SK-N-SH (cell line): ENCODE measurements at regions of chr6 and their contacts with region 1.

Region 1: GRCh38 chr6:73653571-73654424 is at the start of gene SLC17A5:
- DNase-seq: peak; percentile 95
- H3K4me3 ChIP-seq: peak within 1 kb of the TSS; percentile 86 to 92
- H3K27ac ChIP-seq: peak within 1 kb of the TSS; percentile 67 to 70
- H3K4me1 ChIP-seq: peaks cover 0 to 3% of the 10 kb centered on the region in 2 experiments; a peak in 2 of 4 replicates
- H3K27me3 ChIP-seq: no peaks in the 10 kb centered on the region
- CTCF ChIP-seq: no peak
- EP300 ChIP-seq: no peak
- RAD21 ChIP-seq: no peak
- polyA plus RNA-seq, gene SLC17A5: 9.2 and 14.0 TPM in 2 replicates

Region 2: DNA sequence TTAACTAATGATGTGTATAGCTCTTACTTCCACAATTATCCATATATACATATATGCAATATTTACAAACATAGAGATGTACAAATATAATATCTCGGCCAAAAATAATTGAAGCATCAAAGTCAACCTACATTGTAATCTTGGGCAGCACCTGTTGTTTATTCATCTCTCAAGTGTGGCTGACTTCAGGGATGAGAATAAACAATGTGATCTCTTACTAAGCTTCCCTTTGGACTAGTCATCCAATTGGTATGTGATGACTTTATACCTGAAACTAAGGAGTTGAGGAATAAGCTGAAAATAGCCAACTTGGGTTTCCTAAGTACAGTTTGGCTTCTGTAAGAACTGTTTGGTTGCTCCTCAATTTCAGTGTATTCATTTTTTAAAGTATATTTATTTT is 685.1 kb before region 1 on chr6:
- CTCF ChIA-PET with region 1: no interaction called
- POLR2A ChIA-PET with region 1: no interaction called
- DNase-seq: no peak
- H3K4me3 ChIP-seq: no peak overlapping the region
- H3K27ac ChIP-seq: no peak overlapping the region
- H3K4me1 ChIP-seq: peaks cover 0 to 5% of the 10 kb centered on the region in 2 experiments; a peak in 1 of 4 replicates
- H3K27me3 ChIP-seq: no peaks in the 10 kb centered on the region
- CTCF ChIP-seq: no peak
- EP300 ChIP-seq: no peak
- RAD21 ChIP-seq: no peak

Region 3: DNA sequence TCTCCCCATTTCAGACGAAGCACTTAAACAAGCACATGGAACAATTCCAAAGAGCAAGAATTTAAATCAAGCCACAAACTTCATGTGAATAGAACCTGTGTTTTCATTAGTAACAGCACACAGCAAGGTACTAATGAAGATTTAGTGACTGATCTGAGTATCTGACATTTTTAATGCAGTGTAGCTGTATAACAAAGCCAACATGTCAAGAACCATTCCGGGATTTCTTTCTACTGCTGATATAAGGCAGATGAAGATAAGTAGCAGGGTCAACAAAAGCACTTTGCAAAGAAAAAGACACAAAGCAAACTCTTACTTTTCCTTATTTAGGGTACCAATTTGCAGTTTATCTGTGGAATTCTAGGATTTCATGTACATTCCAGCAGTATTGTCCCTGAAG is 11.3 kb before region 1 on chr6:
- CTCF ChIA-PET with region 1: interaction called, 18 read pairs
- POLR2A ChIA-PET with region 1: no interaction called
- DNase-seq: no peak
- H3K4me3 ChIP-seq: no peak overlapping the region
- H3K27ac ChIP-seq: peak overlapping the region in 1 of 2 experiments; percentile 43; a peak in 1 of 4 replicates
- H3K4me1 ChIP-seq: peaks cover 0 to 11% of the 10 kb centered on the region in 2 experiments; a peak in 2 of 4 replicates
- H3K27me3 ChIP-seq: no peaks in the 10 kb centered on the region
- CTCF ChIP-seq: no peak
- EP300 ChIP-seq: peak in 1 of 2 experiments; percentile 48; a peak in 1 of 4 replicates
- RAD21 ChIP-seq: no peak

Region 4: GRCh38 chr6:73774311-73774787 is 120.6 kb after region 1 on chr6:
- CTCF ChIA-PET with region 1: no interaction called
- POLR2A ChIA-PET with region 1: no interaction called
- DNase-seq: no peak
- H3K4me3 ChIP-seq: no peak overlapping the region
- H3K27ac ChIP-seq: peak overlapping the region; percentile 29 to 59; a peak in 3 of 4 replicates
- H3K4me1 ChIP-seq: no peaks in the 10 kb centered on the region
- H3K27me3 ChIP-seq: no peaks in the 10 kb centered on the region
- CTCF ChIP-seq: no peak
- EP300 ChIP-seq: no peak
- RAD21 ChIP-seq: no peak

Region 5: GRCh38 chr6:73832313-73832712 is 178.5 kb after region 1 on chr6:
- CTCF ChIA-PET with region 1: no interaction called
- POLR2A ChIA-PET with region 1: no interaction called
- DNase-seq: no peak
- H3K4me3 ChIP-seq: no peak overlapping the region
- H3K27ac ChIP-seq: no peak overlapping the region
- H3K4me1 ChIP-seq: no peaks in the 10 kb centered on the region
- H3K27me3 ChIP-seq: no peaks in the 10 kb centered on the region
- CTCF ChIP-seq: no peak
- EP300 ChIP-seq: no peak
- RAD21 ChIP-seq: no peak